Right ventricle myocardium inferior (tissue), 1 donor: ENCODE measurements at regions of chr12 and their contacts with region 1.

Region 1: DNA sequence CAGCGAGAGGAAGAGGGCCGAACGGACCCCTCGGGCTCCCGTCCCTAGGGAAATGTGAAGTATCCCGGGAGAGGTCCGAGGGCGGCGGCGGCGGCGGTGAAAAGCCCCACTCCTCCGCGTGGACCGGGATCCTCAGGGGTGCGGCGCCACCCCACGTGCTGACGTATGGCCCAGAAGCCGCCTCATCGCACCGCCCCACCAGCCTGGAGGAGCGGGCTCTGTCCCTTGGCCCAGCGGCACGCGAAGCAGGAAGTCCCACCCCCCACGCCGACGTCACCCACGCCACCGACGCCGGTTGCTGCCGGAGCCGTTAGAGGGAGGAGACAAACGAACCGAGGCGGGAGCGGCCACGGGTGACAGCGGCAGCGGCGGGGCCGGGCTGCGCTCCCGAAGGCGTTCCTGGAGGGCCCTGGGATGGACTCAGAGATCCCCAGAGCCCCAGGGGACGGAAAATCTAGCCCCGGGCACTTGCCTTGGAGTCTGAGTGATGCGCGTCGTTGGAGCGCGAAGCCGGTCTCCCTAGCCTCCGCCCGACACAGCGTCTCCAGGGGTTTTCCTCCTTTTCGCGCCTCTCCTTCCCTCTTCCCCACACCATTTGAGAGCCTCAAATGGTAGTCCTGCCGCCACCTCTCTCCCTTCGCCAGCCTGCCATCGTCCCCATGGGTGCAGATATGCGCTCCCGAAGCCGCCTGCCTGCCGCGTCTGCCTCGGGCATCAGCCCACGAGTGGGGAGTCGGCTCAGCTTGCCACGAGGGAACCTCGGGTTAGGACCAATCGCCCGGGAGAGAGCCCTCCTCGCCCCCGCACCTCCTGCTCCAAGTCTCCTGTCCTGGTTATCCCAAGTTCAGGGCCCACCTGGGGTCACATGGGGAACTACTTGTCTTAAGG is at the start of gene CEP83:
- DNase-seq: peak; percentile 98
- ATAC-seq: peak; percentile 100
- total RNA-seq, gene CEP83: 8.6 TPM

Region 2: GRCh38 chr12:94329362-94329761 is 130.6 kb before region 1 on chr12:
- intact Hi-C with region 1: no loop called
- DNase-seq: no peak
- ATAC-seq: no peak

Region 3: DNA sequence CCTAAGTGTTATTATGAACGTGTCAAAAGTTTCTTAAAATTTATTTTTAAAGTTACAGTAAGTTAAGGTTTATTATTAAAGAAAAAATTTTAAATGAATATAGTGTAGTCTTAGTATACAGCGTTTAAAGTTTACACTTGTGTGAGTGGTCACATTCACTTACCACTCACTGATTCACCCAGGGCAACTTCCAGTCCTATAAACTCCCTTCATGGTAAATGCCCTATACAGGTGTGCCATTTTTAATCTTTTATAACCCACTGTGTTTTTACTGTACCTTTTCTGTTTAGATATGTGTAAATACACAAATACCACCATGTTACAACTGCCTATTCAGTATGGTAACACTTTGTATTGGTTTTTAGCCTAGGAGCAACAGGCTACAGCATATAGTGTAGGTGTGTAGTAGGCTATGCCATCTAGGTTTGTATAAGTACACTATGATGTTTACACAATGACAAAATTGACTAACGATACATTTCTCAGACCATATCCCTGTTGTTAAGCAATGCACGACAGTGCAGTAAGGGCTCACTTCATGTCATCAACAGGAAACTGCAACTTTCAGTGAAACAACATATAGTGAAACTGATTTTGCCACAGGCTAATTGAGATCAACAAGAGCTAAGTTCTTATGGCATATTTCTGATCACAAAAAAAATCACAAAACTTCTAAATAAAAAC is 302.4 kb after region 1 on chr12:
- intact Hi-C with region 1: no loop called
- DNase-seq: no peak
- ATAC-seq: no peak

Region 4: GRCh38 chr12:95548539-95549391 is 1088.8 kb after region 1 on chr12:
- intact Hi-C with region 1: loop called (anchors 10 kb)
- DNase-seq: peak; percentile 80
- ATAC-seq: peak; percentile 94